ENCODE measurements at regions of chr7 and their contacts with region 1.

Region 1: DNA sequence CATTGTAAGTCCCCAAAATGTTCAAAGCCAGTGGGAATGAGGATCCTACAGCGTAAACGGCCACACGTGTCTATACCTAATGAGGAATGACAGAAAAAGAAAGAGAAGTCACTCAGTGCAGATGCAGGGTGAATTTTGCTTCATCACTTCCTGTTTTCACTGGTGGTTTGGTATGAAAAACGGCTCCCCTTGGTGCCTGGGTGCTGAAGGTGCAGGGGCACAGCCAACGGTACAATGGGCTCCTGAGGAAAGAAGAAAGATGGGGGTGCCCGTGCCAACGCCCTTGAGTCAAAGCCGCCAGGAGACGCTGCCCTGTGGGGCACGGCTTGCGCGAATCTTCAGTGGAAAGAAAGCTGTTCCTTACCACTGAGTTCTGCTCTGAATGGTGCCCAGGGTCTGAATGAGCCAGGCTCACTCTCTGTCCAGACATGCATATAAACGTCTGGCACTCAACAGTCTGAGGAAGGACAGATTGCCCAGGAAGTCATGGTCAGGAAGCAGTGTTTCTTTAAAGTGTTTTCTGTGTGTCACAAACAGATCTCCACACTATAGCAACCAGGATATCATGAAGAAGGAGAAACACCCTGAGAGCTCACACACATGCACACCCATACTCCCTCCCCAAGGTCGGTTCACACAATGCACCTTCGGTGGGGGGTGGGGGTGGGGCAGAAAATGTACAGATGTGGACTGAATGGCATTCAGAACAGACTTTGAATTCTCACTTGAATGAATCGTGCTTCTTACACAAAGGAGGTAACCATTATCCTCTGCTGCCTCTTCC is 105.8 kb downstream of the ELMO1 start:
- DNase-seq: peak; percentile 75 to 89 (median 79)
- H3K4me3 ChIP-seq: peak overlapping the region; percentile 39 to 70
- H3K4me3 Mint-ChIP-seq: peak overlapping the region; percentile 92 to 99 (median 96)
- H3K27ac ChIP-seq: peak overlapping the region; percentile 75
- H3K27ac Mint-ChIP-seq: peak overlapping the region; percentile 92 to 98 (median 98)
- H3K4me1 ChIP-seq: peaks cover 90% of the 10 kb centered on the region
- H3K4me1 Mint-ChIP-seq: peaks cover 54 to 89% (median 74%) of the 10 kb centered on the region in 4 donors
- H3K27me3 ChIP-seq: no peaks in the 10 kb centered on the region
- H3K27me3 Mint-ChIP-seq: no peaks in the 10 kb centered on the region

Region 2: DNA sequence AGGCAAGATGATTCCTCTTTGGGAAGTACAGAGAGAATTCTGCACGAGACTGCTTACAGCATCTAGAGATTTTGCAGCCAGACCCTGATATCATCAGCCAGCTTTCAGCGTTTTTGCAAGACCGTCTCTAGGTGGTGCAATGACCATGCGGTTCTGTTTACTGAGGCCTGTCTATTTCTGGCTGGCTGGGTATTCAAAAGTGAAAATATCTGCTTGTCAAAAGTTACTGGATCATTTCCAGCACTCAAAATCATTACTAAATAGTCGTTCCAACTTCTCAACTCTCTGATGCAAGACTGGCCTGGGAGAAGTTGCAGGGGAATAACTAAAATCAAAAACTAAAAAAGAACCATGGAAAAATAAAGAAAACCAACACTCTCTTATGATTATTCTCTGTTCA is 134.4 kb before region 1 on chr7:
- CTCF ChIA-PET with region 1: interaction called, 3 read pairs
- POLR2A ChIA-PET with region 1: interaction called, 8 read pairs
- intact Hi-C with region 1: loop called (anchors 2 kb)
- DNase-seq: peak in 4 of 5 donors; percentile 15 to 38 (median 32)
- H3K4me3 ChIP-seq: no peak overlapping the region
- H3K4me3 Mint-ChIP-seq: no peak overlapping the region
- H3K27ac ChIP-seq: no peak overlapping the region
- H3K27ac Mint-ChIP-seq: peak overlapping the region; percentile 22 to 84 (median 64)
- H3K4me1 ChIP-seq: no peaks in the 10 kb centered on the region
- H3K4me1 Mint-ChIP-seq: peaks cover 0 to 3% (median under 1%) of the 10 kb centered on the region in 4 donors
- H3K27me3 ChIP-seq: no peaks in the 10 kb centered on the region
- H3K27me3 Mint-ChIP-seq: no peaks in the 10 kb centered on the region

Region 3: GRCh38 chr7:37290731-37291130 is 52.1 kb before region 1 on chr7:
- CTCF ChIA-PET with region 1: interaction called, 64 read pairs
- POLR2A ChIA-PET with region 1: interaction called, 3 read pairs
- intact Hi-C with region 1: loop called (anchors 1 kb)
- DNase-seq: no peak
- H3K4me3 ChIP-seq: no peak overlapping the region
- H3K4me3 Mint-ChIP-seq: no peak overlapping the region
- H3K27ac ChIP-seq: no peak overlapping the region
- H3K27ac Mint-ChIP-seq: peak overlapping the region in 6 of 7 donors; percentile 25 to 86 (median 49)
- H3K4me1 ChIP-seq: peaks cover 17% of the 10 kb centered on the region
- H3K4me1 Mint-ChIP-seq: peaks cover 33 to 44% (median 39%) of the 10 kb centered on the region in 4 donors
- H3K27me3 ChIP-seq: no peaks in the 10 kb centered on the region
- H3K27me3 Mint-ChIP-seq: no peaks in the 10 kb centered on the region

Region 4: DNA sequence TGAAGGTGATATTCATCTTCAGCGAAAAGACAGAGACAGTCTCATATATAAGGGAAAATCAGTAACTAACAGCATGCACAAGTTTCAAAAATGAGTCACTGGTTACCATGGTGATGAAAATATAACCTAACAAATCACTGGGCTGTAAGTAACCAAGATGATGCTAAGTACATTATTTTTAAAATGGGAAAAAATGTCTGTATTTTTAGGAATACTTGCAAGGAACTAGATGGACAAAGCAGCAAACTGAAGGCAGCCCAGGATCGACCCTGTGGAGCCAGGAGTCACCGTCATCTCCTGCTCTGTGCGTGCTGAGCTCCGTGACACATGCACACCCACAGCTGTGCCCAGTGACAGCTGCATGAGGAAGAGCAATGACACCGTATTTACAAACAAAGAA is 31.5 kb before region 1 on chr7:
- CTCF ChIA-PET with region 1: interaction called, 14 read pairs
- POLR2A ChIA-PET with region 1: interaction called, 26 read pairs
- intact Hi-C with region 1: loop called (anchors 1 kb)
- DNase-seq: peak; percentile 47 to 66 (median 61)
- H3K4me3 ChIP-seq: no peak overlapping the region
- H3K4me3 Mint-ChIP-seq: peak overlapping the region in 7 of 8 donors; percentile 44 to 87 (median 75)
- H3K27ac ChIP-seq: peak overlapping the region; percentile 54
- H3K27ac Mint-ChIP-seq: peak overlapping the region; percentile 95 to 99 (median 98)
- H3K4me1 ChIP-seq: peaks cover 53% of the 10 kb centered on the region
- H3K4me1 Mint-ChIP-seq: peaks cover 57 to 89% (median 71%) of the 10 kb centered on the region in 4 donors
- H3K27me3 ChIP-seq: no peaks in the 10 kb centered on the region
- H3K27me3 Mint-ChIP-seq: no peaks in the 10 kb centered on the region

Region 5: GRCh38 chr7:37604078-37604477 is 261.2 kb after region 1 on chr7:
- CTCF ChIA-PET with region 1: no interaction called
- POLR2A ChIA-PET with region 1: no interaction called
- intact Hi-C with region 1: no loop called
- DNase-seq: no peak
- H3K4me3 ChIP-seq: no peak overlapping the region
- H3K4me3 Mint-ChIP-seq: no peak overlapping the region
- H3K27ac ChIP-seq: no peak overlapping the region
- H3K27ac Mint-ChIP-seq: no peak overlapping the region
- H3K4me1 ChIP-seq: no peaks in the 10 kb centered on the region
- H3K4me1 Mint-ChIP-seq: no peaks in the 10 kb centered on the region
- H3K27me3 ChIP-seq: no peaks in the 10 kb centered on the region
- H3K27me3 Mint-ChIP-seq: peaks cover 3 to 8% of the 10 kb centered on the region in 2 donors